IMR-90 (cell line): ENCODE measurements at regions of chr9 and their contacts with region 1.

Region 1: GRCh38 chr9:131530920-131531832 is at the start of gene UCK1:
- DNase-seq: peak; percentile 62
- ATAC-seq: peak; percentile 94
- H3K4me3 ChIP-seq: peak within 1 kb of the TSS; percentile 95
- H3K27ac ChIP-seq: peak within 1 kb of the TSS; percentile 93
- H3K4me1 ChIP-seq: peaks cover 8% of the 10 kb centered on the region
- H3K27me3 ChIP-seq: peaks cover 4% of the 10 kb centered on the region
- CTCF ChIP-seq: no peak
- POLR2A ChIP-seq: no peak
- RAD21 ChIP-seq: no peak; the same call in 1 of the 2 replicates
- total RNA-seq, gene UCK1: 16.9 and 17.9 TPM in 2 replicates

Region 2: GRCh38 chr9:131495785-131496184 is 35.4 kb before region 1 on chr9:
- CTCF ChIA-PET with region 1: no interaction called
- POLR2A ChIA-PET with region 1: no interaction called
- dilution Hi-C with region 1: no loop called
- in situ Hi-C with region 1: no loop called
- intact Hi-C with region 1: no loop called
- DNase-seq: no peak
- ATAC-seq: no peak
- H3K4me3 ChIP-seq: no peak overlapping the region
- H3K27ac ChIP-seq: no peak overlapping the region
- H3K4me1 ChIP-seq: no peaks in the 10 kb centered on the region
- H3K27me3 ChIP-seq: no peaks in the 10 kb centered on the region
- CTCF ChIP-seq: no peak
- POLR2A ChIP-seq: no peak
- RAD21 ChIP-seq: no peak

Region 3: DNA sequence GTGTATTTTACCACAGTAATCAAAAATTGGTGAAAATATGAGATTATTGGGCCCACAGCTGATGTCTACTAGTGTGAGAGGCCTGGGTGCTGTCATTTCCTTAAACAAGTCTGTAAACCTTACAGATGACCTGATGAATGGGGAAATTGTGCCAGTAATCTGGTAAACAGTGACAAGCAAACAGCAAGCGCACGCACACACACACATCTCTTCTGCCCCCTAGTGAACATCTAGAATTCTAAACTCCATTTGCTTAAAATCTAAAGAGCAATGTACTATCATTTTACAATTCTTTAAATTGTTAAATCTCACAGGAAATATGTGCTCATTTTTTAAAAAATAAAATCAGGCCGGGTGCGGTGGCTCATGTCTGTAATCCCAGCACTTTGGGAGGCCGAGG is 216.2 kb after region 1 on chr9:
- CTCF ChIA-PET with region 1: interaction called, 3 read pairs
- POLR2A ChIA-PET with region 1: no interaction called
- dilution Hi-C with region 1: no loop called
- in situ Hi-C with region 1: no loop called
- intact Hi-C with region 1: loop called (anchors 2 kb)
- DNase-seq: peak; percentile 58
- ATAC-seq: peak; percentile 86
- H3K4me3 ChIP-seq: no peak overlapping the region
- H3K27ac ChIP-seq: no peak overlapping the region
- H3K4me1 ChIP-seq: no peaks in the 10 kb centered on the region
- H3K27me3 ChIP-seq: peaks cover 12% of the 10 kb centered on the region
- CTCF ChIP-seq: peak; percentile 68
- POLR2A ChIP-seq: no peak
- RAD21 ChIP-seq: peak; percentile 71